Posterior vena cava (tissue), 2 donors: ENCODE measurements at regions of chr22 and their contacts with region 1.

Region 1: DNA sequence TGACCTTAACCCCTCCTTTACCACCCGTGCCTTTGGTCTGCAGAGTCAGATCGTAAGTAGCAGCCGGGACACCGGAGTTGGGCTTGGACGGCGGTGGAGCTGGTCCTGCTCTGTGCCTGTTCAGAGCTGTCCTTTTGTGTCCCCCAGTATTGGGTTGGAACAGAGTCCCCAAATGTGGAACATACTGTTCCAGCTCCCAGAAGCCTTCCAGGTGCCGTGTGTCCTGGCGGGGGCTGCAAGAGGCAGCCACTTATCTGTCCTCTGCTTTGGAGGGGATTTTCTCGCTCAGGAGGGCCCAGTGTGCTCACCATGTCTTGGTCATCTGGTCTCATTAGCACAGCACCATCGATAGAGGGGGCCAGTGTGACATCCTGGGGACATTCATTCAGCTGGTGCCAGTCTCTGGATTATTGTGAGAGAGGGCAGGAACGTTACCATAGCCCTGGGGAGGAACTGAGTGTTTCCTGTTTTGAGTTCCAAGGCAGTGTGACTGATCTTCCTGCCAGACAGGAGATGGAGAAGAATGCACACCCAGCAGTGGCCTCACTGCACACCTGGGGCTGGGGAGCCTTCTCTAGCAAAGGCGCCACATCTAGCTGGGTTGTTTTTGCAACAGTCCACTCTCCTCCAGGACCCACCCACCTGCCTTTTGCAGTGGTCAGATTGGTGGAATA is 12.4 kb downstream of the CRELD2 start:
- DNase-seq: no peak

Region 2: DNA sequence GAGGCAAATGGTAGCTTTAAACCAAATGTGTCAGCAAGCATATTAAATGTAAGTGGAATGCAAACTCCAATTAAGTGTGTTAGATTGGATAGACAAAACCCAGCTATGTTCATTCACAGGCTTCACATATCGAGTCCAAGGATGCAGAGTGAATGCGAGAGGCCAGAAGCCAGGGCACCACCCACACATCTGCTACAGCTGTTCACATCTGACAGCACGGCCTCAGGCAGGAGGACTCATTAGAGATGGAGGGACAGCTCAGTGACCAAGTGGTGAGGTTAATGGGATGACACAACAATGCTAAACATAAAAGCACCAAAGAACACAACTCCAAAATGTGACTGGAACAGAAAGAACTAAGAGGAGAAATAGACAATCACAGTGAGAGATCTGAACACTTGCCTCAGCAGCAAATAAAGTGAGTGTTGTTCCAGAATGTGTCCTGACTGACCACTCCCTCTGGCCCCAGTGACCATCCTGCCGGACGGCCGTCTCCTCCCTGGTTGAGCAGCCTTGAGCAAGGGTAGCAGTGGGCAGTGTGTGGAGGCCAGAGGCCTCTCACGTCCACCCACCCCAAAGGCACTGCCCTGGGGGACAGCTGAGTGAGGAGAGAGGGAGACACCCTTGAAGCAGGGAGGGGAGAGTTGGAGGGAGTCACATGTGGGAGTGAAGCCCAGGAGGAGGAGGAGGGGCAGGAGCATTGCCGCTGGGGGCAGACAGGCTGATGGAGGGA is 36.4 kb before region 1 on chr22:
- intact Hi-C with region 1: no loop called
- DNase-seq: peak; percentile 65

Region 3: GRCh38 chr22:49966774-49967705 is 36.2 kb after region 1 on chr22:
- intact Hi-C with region 1: loop called (anchors 5 kb)
- DNase-seq: peak; percentile 90

Region 4: GRCh38 chr22:50012716-50013181 is 81.9 kb after region 1 on chr22 and contains the start of gene IL17REL:
- intact Hi-C with region 1: loop called in 1 of 2 experiments (anchors 5 kb)
- DNase-seq: peak; percentile 80
- total RNA-seq, gene IL17REL: not detected

Region 5: GRCh38 chr22:50030297-50031188 is 99.7 kb after region 1 on chr22:
- intact Hi-C with region 1: loop called (anchors 2 kb)
- DNase-seq: peak; percentile 92